Activated CD4-positive, alpha-beta memory T cell treated with anti-CD3 and anti-CD28 coated beads, Interleukin-2, amount 10 ng/mL, durations not matched to agents 7 days and 5 days (primary cell): ENCODE measurements at regions of chr1 and their contacts with region 1.

Region 1: GRCh38 chr1:227563324-227564201 is at the start of gene ZNF678:
- DNase-seq: peak; percentile 88
- H3K4me3 Mint-ChIP-seq: peak within 1 kb of the TSS; percentile 79
- H3K27ac Mint-ChIP-seq: peak within 1 kb of the TSS; percentile 74
- H3K4me1 Mint-ChIP-seq: peaks cover 20% of the 10 kb centered on the region
- H3K27me3 Mint-ChIP-seq: peaks cover 18% of the 10 kb centered on the region
- total RNA-seq, gene ZNF678: 4.6 to 4.9 TPM

Region 2: DNA sequence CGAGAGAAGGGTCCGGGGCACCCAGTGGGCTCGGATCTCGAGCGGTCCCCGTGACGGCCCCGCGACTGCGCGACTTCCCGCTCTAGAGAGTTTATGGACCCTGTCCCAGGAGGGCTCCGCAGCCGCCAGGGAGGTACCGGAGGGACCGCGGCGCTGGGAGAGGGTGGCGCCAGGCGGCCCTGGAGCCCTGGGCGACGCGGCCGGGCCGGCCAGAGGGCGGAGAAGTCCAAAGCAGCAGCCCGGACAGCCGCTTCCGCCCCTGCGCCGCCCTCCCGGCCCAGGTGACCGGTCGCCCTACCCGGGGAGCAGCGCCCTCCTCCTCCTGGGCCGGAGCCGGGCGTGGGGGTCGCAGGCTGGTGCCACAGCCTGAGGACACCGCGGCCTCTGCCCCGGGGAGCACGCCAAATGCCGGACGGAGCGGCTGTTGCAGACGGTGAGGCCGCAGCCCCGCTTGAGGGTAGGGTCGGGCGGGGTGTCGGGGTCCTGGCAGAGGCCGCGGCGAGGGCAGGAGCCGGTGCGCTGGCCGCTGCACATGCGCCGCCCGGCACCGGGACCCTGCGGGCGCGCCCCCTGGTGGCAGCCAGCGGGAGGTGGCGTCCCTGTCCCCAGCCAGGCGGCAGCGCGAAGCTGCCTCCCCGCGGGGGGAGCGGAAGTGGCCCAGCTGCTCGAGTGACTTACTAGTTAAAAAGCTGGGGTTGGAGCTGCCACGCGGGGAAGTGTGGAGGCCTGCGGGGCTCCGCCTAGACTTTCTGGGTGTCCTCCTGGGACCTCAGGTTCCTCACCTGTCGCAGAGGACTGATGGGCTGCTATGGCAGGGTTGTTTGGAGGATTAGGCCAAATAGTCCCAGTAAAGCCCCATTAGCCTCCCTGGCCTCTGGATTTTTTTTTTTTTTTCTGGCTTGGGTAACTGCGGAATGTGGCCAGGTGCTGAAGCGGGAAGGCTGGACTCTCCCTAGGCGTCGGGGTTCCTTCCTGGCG is 21.1 kb before region 1 on chr1:
- CTCF ChIA-PET with region 1: interaction called, 29 read pairs
- POLR2A ChIA-PET with region 1: interaction called, 6 read pairs
- DNase-seq: peak; percentile 90
- H3K4me3 Mint-ChIP-seq: no peak overlapping the region
- H3K27ac Mint-ChIP-seq: no peak overlapping the region
- H3K4me1 Mint-ChIP-seq: peaks cover 5% of the 10 kb centered on the region
- H3K27me3 Mint-ChIP-seq: no peaks in the 10 kb centered on the region